ENCODE measurements at regions of chr9 and their contacts with region 1.

Region 1: DNA sequence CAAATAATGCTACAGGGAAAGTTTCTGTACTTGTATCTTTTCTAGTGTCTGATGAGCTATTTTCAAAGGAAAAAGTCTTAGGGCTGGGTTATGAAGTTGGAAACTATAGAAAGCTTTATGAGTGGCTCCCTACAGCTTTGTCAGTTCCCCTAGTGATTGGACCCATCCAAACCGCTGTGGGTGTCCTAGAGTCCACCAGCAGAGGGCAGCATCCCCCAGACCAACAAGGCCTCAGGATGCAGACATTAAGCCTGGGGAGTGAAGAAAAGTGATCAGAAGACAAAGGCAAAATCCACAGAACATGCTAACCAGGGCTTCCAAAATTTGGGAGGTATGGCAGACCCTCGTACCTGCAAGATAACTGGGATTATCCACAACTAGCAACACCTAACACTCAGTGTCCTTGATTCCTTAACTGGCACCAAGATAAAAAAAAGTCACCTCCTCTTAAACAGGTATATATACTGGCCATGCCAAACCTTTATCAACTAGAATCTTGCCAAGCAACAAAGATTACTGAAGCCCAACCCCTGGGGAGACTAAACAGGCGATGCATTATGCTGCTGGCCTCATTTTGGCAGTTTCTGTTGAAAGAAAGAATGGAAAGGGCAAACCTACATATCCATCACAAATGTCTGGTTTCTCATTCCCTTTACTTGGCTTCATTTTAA is 110.4 kb upstream of the NR5A1 start:
- DNase-seq: peak; percentile 87
- H3K4me3 ChIP-seq: no peak overlapping the region
- H3K27ac ChIP-seq: no peak overlapping the region
- H3K4me1 ChIP-seq: peaks cover 18% of the 10 kb centered on the region
- H3K27me3 ChIP-seq: no peaks in the 10 kb centered on the region
- CTCF ChIP-seq: peak; percentile 96

Region 2: GRCh38 chr9:124551472-124552272 is 65.9 kb before region 1 on chr9:
- CTCF ChIA-PET with region 1: interaction called, 12 read pairs
- POLR2A ChIA-PET with region 1: no interaction called
- intact Hi-C with region 1: loop called (anchors 5 kb)
- DNase-seq: peak; percentile 73
- H3K4me3 ChIP-seq: no peak overlapping the region
- H3K27ac ChIP-seq: no peak overlapping the region
- H3K4me1 ChIP-seq: peaks cover 3% of the 10 kb centered on the region
- H3K27me3 ChIP-seq: no peaks in the 10 kb centered on the region
- CTCF ChIP-seq: peak; percentile 88

Region 3: GRCh38 chr9:124583128-124583527 is 34.5 kb before region 1 on chr9:
- CTCF ChIA-PET with region 1: interaction called, 12 read pairs
- POLR2A ChIA-PET with region 1: no interaction called
- intact Hi-C with region 1: no loop called
- DNase-seq: no peak
- H3K4me3 ChIP-seq: no peak overlapping the region
- H3K27ac ChIP-seq: no peak overlapping the region
- H3K4me1 ChIP-seq: no peaks in the 10 kb centered on the region
- H3K27me3 ChIP-seq: no peaks in the 10 kb centered on the region
- CTCF ChIP-seq: no peak

Region 4: DNA sequence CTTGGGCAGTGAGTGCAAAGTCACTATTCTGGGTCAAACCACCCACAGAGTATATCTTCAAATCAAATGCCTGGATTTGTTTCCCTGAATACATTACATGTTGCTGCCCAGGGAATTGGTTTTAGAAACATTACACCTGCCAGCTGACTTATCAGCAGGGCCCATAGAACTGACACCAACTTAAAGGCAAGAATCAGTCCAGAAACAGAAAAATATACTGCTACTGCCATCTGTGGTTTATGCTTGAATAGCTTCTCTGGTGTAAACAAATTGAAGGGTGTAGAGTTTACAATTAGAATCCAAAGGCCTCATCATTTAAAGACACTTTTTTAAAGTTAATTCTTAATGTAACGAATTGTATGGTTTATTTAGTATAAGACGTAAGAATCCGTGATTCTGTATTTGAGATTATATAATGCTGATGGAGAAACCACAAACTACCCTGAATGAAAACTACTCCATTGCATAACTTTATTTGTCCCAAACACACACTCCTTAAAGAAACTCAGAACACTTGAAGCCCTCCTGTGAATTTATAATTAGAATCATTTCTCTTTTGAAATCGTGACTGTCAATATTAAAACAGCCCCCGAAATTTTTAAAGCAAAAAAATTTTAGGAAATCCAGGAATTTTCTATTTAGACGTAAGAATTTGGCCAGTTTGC is 147.3 kb after region 1 on chr9:
- CTCF ChIA-PET with region 1: interaction called, 5 read pairs
- POLR2A ChIA-PET with region 1: no interaction called
- intact Hi-C with region 1: loop called (anchors 5 kb)
- DNase-seq: peak; percentile 59
- H3K4me3 ChIP-seq: no peak overlapping the region
- H3K27ac ChIP-seq: no peak overlapping the region
- H3K4me1 ChIP-seq: peaks cover 58% of the 10 kb centered on the region
- H3K27me3 ChIP-seq: no peaks in the 10 kb centered on the region
- CTCF ChIP-seq: peak; percentile 65

Measured in A673 (cell line).